Adrenal gland (tissue), 19 donors: ENCODE measurements at regions of chr5 and their contacts with region 1.

Region 1: GRCh38 chr5:96752341-96753016 is 55.3 kb downstream of the ERAP1 start:
- DNase-seq: peak in 5 of 7 donors; percentile 33 to 65 (median 53)
- H3K4me3 ChIP-seq: no peak overlapping the region
- H3K27ac ChIP-seq: peak overlapping the region in 2 of 5 donors; percentile 11 to 50
- H3K4me1 ChIP-seq: peaks cover 10 to 38% of the 10 kb centered on the region in 2 donors
- H3K27me3 ChIP-seq: no peaks in the 10 kb centered on the region
- CTCF ChIP-seq: peak; percentile 33 to 80 (median 58)
- POLR2A ChIP-seq: no peak

Region 2: DNA sequence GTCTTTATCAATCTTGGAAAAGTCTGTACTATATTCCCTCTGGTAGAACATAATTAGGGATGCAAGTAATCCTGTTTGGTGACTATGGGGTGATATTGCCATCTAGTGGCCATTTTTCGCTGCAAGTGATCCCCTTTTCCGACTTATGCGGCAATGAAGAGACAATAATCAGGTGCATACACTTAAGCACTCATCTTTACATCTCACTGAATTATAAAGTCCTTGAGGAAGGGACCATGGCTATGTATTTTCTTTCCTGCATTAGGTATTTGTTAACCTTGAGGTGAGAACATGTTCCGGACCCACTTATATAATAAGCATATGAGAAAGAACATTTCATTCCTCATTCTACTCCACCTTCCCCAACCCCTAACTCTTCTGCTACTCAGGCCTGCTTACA is 409.6 kb after region 1 on chr5:
- intact Hi-C with region 1: loop called in 1 of 2 experiments (anchors 10 kb)
- DNase-seq: peak; percentile 51 to 86 (median 70)
- H3K4me3 ChIP-seq: no peak overlapping the region
- H3K27ac ChIP-seq: no peak overlapping the region
- H3K4me1 ChIP-seq: peaks cover 0 to 7% of the 10 kb centered on the region in 2 donors
- H3K27me3 ChIP-seq: no peaks in the 10 kb centered on the region
- CTCF ChIP-seq: peak; percentile 73 to 92 (median 85)
- POLR2A ChIP-seq: no peak

Region 3: DNA sequence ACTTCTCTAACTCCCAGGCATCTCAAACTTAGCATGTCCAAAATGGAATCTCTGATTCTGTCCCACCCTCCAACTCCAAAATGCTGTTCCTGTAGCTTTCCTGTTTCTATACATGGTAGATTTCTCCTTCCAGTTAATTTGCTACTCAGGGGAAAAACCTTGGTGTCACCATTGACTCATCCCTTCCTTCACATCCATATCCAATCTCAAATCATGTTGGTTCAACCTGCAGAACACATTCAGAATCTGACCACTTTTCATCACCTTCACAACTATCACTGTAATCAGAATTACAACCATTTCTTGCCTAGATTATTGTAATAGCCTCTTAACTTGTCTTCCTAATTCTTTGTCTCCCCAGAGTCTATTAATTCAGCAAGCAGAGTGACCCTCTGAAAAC is 419.7 kb after region 1 on chr5:
- intact Hi-C with region 1: loop called (anchors 10 kb)
- DNase-seq: no peak
- H3K4me3 ChIP-seq: no peak overlapping the region
- H3K27ac ChIP-seq: no peak overlapping the region
- H3K4me1 ChIP-seq: peaks cover 0 to 10% of the 10 kb centered on the region in 2 donors
- H3K27me3 ChIP-seq: no peaks in the 10 kb centered on the region
- CTCF ChIP-seq: no peak
- POLR2A ChIP-seq: no peak